ENCODE measurements at regions of chr2 and their contacts with region 1.

Region 1: DNA sequence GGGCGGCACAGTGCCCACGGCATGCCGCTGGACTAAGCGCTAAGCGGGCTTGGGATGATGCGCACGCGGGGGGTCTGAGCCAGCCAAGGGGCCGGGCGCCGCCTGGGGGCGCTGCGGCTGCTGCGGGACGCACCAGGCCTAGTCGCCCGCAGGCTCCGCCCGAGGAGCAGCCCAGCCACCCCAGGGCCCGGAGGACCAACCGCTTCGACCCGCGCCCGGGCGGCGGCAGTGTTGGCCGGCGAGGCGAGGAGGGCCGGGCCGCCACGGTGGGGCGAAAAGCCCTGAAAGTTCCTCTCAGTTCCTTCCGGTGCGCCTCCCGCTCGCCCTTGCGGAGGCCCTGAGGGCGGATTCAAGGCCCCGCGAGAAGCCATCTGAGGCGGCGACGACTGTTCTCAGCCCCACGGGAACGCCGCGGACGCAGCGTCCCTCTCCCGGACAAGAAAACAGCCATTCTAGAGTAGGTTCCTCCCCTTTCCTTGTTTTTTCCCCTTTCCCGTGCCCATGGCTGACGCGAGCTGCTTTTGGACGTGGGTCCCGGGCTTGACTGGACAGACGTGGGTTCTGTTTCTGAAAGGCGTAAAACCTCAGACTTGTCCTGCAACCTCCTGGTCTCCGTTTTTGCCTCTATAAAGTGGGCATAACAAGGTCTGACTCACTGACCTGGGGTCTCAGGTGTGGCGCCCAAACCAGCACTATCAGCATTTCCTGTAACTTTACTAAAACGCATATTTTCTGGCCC is at the start of gene ANKAR:
- DNase-seq: peak; percentile 66 to 95 (median 88)

Region 2: GRCh38 chr2:189762551-189763298 is 88.2 kb after region 1 on chr2 and contains the start of gene OSGEPL1:
- intact Hi-C with region 1: loop called (anchors 5 kb)
- DNase-seq: peak; percentile 93 to 98 (median 97)